ENCODE measurements at regions of chr18 and their contacts with region 1.

Region 1: DNA sequence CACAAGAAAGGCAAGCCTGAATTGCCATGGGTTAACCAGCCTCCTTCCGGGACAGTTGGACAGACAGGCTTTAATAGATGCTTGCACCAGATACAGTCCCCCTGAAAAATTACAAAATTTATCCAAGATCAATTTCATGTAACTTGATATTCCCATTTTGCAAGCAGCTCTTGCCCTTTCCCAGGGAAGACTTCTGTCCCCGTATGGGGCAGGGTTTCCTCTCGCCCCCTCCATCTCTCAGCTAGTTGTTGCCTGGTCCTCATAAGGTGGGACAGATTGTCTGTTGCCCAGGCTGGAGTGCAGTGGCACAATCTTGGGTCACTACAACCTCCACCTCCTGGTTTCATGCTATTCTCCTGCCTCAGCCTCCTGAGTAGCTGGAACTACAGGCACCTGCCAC is 61.2 kb downstream of the TTC39C start:
- DNase-seq: no peak
- H3K4me3 ChIP-seq: no peak overlapping the region
- H3K4me3 Mint-ChIP-seq: no peak overlapping the region
- H3K27ac Mint-ChIP-seq: peak overlapping the region; percentile 48
- H3K4me1 ChIP-seq: peaks cover 4% of the 10 kb centered on the region; the same call in 1 of the 2 replicates
- H3K4me1 Mint-ChIP-seq: no peaks in the 10 kb centered on the region
- H3K27me3 ChIP-seq: no peaks in the 10 kb centered on the region
- H3K27me3 Mint-ChIP-seq: no peaks in the 10 kb centered on the region
- CTCF ChIP-seq: no peak

Region 2: GRCh38 chr18:24014062-24014985 is 61.4 kb before region 1 on chr18 and contains the start of gene TTC39C:
- CTCF ChIA-PET with region 1: interaction called, 3 read pairs
- POLR2A ChIA-PET with region 1: no interaction called
- intact Hi-C with region 1: loop called (anchors 10 kb)
- DNase-seq: peak; percentile 38 to 47
- H3K4me3 ChIP-seq: peak within 1 kb of the TSS; percentile 72
- H3K4me3 Mint-ChIP-seq: peak within 1 kb of the TSS; percentile 81
- H3K27ac Mint-ChIP-seq: peak within 1 kb of the TSS; percentile 59
- H3K4me1 ChIP-seq: no peaks in the 10 kb centered on the region
- H3K4me1 Mint-ChIP-seq: no peaks in the 10 kb centered on the region
- H3K27me3 ChIP-seq: no peaks in the 10 kb centered on the region
- H3K27me3 Mint-ChIP-seq: no peaks in the 10 kb centered on the region
- CTCF ChIP-seq: no peak
- total RNA-seq, gene TTC39C: 9.1 and 9.3 TPM in 2 replicates

Region 3: DNA sequence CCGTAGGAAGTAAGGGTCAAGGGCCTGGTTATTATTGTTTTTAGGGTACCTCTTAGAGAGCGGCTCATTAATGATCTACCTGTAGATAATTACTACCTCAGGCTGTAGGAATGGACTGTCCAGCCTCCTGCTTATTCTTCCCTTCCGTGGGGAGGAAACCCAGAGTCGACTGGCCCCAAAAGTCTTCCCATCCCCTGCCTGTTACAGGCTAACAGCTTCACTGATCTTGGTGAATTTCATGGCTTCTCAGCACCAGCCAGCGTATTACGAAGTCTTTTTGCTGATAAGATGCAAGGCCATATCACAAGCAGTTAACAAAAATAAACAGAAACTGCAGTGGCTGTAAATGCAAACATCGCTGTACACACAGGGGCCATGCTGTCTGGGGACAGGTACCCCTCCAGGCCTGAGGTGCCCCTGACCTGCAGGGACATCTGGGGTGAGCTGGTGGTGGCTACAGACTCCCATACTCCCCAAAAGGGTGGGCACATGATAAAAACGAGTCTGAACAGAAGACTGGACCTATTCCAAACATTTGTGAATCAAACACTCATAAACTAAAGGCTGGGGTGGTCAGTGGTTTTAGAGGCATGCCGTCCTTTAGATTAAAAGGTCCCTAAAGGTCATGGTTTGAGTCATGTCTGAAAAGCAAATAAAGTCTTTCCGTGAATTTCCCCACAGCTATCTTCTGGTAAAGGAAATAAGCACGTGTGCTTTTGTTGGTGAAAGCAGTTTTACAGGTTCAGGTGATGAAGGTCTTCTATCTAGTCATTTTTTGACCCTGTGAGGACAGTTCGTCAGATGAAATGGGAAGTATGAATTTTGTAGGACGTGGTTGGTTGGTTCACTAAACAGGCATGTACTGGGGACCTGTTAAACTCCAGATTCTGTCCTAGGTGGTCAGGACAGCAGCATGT is 24.4 kb before region 1 on chr18:
- CTCF ChIA-PET with region 1: no interaction called
- POLR2A ChIA-PET with region 1: no interaction called
- intact Hi-C with region 1: no loop called
- DNase-seq: peak; percentile 52 to 53
- H3K4me3 ChIP-seq: no peak overlapping the region
- H3K4me3 Mint-ChIP-seq: peak overlapping the region; percentile 65
- H3K27ac Mint-ChIP-seq: peak overlapping the region; percentile 80
- H3K4me1 ChIP-seq: peaks cover 8% of the 10 kb centered on the region; the same call in 1 of the 2 replicates
- H3K4me1 Mint-ChIP-seq: peaks cover 13% of the 10 kb centered on the region
- H3K27me3 ChIP-seq: no peaks in the 10 kb centered on the region
- H3K27me3 Mint-ChIP-seq: no peaks in the 10 kb centered on the region
- CTCF ChIP-seq: no peak

Measured in Caco-2 (cell line).